ENCODE measurements at regions of chr15 and their contacts with region 1.

Region 1: DNA sequence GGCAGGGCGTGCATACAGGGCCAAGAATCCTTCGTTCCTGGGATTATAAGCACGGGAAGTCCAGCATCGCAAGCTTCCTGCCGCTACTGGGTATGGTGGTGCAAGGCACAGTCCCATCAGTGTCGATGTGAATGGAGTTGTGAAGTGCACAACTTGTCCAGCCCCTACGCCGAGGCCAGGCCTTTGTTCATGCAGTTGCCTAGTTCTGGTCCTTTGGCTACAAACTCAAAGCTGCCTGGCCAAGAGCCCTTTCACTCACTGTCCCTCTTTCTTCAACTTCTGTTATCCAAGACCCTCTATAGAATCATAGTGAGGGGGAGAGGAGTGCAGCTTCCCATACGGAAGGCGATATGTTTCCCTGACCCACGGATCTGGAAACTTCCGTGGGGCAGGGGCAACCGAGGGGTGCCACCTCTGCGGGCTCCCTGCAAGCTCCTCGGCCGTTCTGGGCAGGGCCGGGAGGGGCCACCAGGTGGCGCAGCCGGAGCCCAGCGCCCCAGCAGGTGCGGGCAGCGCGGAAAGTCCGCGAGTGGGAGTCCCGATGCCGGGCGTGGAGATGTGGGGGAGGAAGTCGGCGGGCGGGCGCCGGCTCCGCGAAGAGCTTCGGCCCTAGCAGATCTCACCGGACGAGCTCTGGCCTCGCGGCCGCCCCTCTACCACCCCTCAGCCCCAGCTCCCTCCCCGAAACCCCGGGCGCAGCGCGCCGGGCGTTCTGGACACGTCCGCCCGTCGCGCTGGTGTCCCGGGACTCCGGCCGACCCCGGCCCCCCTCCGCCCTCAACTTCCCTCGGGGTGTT is 693 bp downstream of the RASGRP1 start:
- DNase-seq: peak; percentile 86
- H3K4me3 Mint-ChIP-seq: peak overlapping the region; percentile 98
- H3K27ac Mint-ChIP-seq: peak overlapping the region; percentile 95
- H3K4me1 Mint-ChIP-seq: peaks cover 57% of the 10 kb centered on the region
- H3K27me3 Mint-ChIP-seq: no peaks in the 10 kb centered on the region

Region 2: DNA sequence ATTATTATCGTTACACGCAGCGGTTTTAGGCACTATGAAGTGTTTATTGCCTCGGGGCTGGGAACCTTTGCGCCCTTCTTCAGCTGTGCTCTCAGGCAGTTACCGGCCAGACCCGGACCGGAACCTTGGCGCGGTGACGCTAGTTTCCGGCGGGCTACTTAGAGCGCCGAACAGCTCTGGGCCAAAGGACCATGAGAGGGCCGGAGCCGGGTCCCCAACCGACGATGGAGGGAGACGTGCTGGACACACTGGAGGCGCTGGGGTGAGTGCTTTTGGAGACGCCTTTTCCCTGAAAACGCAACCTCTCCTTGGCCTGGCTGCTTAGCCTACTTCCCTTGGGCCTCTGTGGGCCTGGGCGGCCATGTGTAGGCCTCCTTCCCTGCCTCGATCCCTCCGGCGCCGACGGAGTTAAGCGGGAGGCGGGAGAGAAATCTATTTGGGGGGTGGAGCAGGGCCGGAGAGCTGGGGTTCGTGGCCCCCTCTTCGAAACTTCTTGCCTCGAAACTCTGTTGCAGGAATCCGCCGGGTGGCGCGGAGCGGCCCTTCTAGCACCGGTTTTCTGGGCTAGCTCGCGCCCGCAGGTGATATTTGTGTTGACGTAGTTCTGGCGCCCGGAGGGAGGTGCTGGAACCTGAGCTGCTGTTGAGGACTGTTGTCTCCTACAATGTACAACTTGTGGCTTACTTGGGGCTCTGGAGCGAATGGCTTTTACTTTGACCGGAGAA is 109.8 kb before region 1 on chr15 and contains the start of gene FAM98B:
- CTCF ChIA-PET with region 1: no interaction called
- POLR2A ChIA-PET with region 1: no interaction called
- DNase-seq: peak; percentile 84
- H3K4me3 Mint-ChIP-seq: peak within 1 kb of the TSS; percentile 99
- H3K27ac Mint-ChIP-seq: peak within 1 kb of the TSS; percentile 96
- H3K4me1 Mint-ChIP-seq: peaks cover 33% of the 10 kb centered on the region
- H3K27me3 Mint-ChIP-seq: peaks cover 17% of the 10 kb centered on the region
- total RNA-seq, gene FAM98B: 34.7 to 42.9 TPM

Region 3: DNA sequence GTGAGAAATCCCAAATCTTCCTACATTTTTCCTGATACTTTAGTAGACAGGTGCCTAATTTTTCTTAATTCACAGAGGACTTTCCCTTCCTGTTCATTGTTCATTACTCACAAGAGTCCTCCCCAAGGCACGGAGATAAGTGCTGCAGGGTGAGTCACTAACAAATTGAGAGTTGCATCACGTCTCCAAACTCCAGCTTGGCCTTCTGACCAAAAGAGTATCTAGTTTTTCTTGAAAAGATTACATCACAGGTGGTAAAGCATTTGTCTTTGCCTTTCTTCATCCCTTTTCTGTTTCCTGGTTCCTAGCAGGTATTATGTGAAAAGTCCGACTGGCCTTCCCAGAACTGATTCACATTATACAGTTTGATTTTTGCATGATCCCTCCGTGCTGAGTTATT is 25.6 kb after region 1 on chr15:
- CTCF ChIA-PET with region 1: interaction called, 10 read pairs
- POLR2A ChIA-PET with region 1: no interaction called
- DNase-seq: no peak
- H3K4me3 Mint-ChIP-seq: no peak overlapping the region
- H3K27ac Mint-ChIP-seq: no peak overlapping the region
- H3K4me1 Mint-ChIP-seq: peaks cover 35% of the 10 kb centered on the region
- H3K27me3 Mint-ChIP-seq: no peaks in the 10 kb centered on the region

Region 4: DNA sequence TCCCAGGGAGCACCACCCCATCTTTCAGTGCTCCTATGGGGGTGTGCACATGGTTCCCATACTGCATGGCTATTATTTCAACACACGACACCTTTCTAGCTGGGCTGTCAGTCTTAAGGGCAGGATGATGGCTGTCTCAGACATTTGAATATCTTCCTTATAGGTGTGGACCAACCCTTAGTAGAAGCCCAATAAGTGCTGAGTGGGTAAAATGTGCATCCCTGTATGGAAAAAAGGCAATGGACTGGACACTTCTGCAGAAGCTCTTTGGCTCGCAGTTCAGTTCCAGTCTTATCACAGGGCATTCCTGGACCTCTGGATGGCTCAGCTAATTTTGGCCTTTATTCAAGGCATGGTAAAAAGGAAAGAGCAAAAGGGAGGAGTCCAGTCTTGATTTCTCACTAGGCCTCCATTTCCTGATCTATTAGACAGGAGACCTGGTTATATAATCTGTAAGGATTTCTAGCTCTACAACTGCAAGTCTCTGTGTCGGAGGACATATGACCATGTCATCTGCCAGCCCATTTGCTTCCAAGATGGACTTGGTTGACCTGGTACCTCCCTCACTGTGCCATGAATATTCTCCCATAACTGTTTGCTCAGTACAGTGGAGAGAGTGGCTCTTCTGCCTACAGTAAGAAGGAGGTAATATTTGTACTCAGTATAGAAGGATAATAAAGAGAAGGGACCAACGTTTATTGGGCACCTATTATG is 54.5 kb after region 1 on chr15:
- CTCF ChIA-PET with region 1: interaction called, 33 read pairs
- POLR2A ChIA-PET with region 1: no interaction called
- DNase-seq: no peak
- H3K4me3 Mint-ChIP-seq: no peak overlapping the region
- H3K27ac Mint-ChIP-seq: no peak overlapping the region
- H3K4me1 Mint-ChIP-seq: peaks cover 28% of the 10 kb centered on the region
- H3K27me3 Mint-ChIP-seq: no peaks in the 10 kb centered on the region

Region 5: GRCh38 chr15:38660738-38661137 is 96.8 kb after region 1 on chr15:
- CTCF ChIA-PET with region 1: interaction called, 32 read pairs
- POLR2A ChIA-PET with region 1: no interaction called
- DNase-seq: peak; percentile 28
- H3K4me3 Mint-ChIP-seq: peak overlapping the region; percentile 42
- H3K27ac Mint-ChIP-seq: peak overlapping the region; percentile 85
- H3K4me1 Mint-ChIP-seq: peaks cover 80% of the 10 kb centered on the region
- H3K27me3 Mint-ChIP-seq: no peaks in the 10 kb centered on the region

Region 6: GRCh38 chr15:38690689-38691332 is 126.9 kb after region 1 on chr15:
- CTCF ChIA-PET with region 1: interaction called, 194 read pairs
- POLR2A ChIA-PET with region 1: interaction called, 20 read pairs
- DNase-seq: peak; percentile 88
- H3K4me3 Mint-ChIP-seq: no peak overlapping the region
- H3K27ac Mint-ChIP-seq: peak overlapping the region; percentile 95
- H3K4me1 Mint-ChIP-seq: peaks cover 90% of the 10 kb centered on the region
- H3K27me3 Mint-ChIP-seq: no peaks in the 10 kb centered on the region

Measured in activated CD4-positive, alpha-beta T cell treated with anti-CD3 and anti-CD28 coated beads, Interleukin-2, amount 10 ng/mL, durations not matched to agents 7 days and 5 days (primary cell).